ENCODE measurements at regions of chrX and their contacts with region 1.

Region 1: DNA sequence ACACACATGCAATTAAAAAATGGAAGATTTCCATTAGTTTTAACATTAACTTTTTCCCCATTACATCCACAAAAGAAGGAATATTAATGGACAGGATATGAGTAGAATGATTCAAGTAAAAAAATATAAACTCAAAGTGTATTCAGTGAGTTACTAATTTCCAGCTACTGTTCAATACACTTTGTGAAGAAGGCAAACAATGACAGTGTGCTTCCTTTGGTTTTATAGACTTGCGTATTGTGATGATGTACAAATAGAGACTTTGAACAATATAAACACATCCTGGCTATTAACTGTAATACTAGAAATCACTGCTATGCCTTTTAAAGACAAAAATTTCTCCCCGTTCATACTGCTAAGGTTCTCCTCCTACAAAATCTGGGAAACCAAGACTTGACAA is 171.4 kb downstream of the ASB9 start:
- DNase-seq: no peak
- H3K4me3 ChIP-seq: no peak overlapping the region
- H3K27ac ChIP-seq: no peak overlapping the region
- H3K4me1 ChIP-seq: no peaks in the 10 kb centered on the region
- H3K27me3 ChIP-seq: no peaks in the 10 kb centered on the region
- CTCF ChIP-seq: no peak

Region 2: GRCh38 chrX:15254852-15255251 is 156.3 kb after region 1 on chrX:
- CTCF ChIA-PET with region 1: interaction called, 11 read pairs
- dilution Hi-C with region 1: no loop called
- in situ Hi-C with region 1: no loop called
- intact Hi-C with region 1: no loop called
- DNase-seq: no peak
- H3K4me3 ChIP-seq: no peak overlapping the region
- H3K27ac ChIP-seq: no peak overlapping the region
- H3K4me1 ChIP-seq: no peaks in the 10 kb centered on the region
- H3K27me3 ChIP-seq: no peaks in the 10 kb centered on the region
- CTCF ChIP-seq: no peak

Measured in mammary epithelial cell (primary cell).